Sigmoid colon (tissue), 7 donors: ENCODE measurements at regions of chr1 and their contacts with region 1.

Region 1: DNA sequence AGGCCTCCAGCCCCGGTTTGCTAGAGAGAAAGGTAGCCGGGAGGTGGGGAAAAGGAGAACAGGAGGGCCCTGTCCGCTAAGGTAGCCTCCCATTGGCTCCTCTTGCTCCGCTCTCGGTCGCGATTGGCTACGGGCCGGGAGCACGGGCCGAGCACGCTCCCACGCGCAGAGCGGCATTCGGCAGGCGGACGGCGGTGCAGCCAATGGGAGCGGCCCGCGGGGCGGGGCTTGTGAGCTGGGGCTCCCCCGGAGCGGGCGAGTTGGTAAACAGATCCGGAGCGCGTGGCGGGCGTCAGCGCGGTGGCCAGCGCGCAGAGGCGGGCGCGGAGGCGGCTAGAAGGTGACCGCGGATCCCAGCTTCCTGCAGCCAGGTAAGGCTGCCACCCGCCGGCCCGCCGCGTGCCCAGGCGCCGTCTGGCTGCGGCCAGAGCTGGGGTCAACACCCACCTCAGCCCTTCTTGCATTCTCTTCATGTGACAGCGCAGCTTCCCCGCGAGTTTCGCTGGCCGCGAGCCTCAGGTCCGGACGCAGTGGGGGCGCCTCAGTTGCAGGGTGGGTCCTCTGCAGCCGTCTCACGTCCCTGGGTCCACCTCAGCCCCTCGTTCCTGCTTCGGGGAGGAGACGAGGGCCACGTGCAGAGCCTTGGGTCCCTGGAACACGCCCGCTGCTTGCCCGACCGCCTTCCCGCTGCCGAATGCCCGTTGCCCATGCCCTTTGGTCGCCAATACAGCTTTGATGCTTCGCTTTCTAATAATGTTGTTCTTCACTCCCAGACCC is at the start of gene COQ8A:
- DNase-seq: peak; percentile 100
- H3K4me3 ChIP-seq: peak within 1 kb of the TSS; percentile 62 to 90 (median 72)
- H3K27ac ChIP-seq: peak within 1 kb of the TSS; percentile 96 to 100 (median 100)
- H3K4me1 ChIP-seq: peaks cover 0 to 56% (median 56%) of the 10 kb centered on the region in 4 donors
- H3K27me3 ChIP-seq: no peaks in the 10 kb centered on the region
- CTCF ChIP-seq: no peak
- EP300 ChIP-seq: no peak
- POLR2A ChIP-seq: no peak
- total RNA-seq, gene COQ8A: 57.8 to 129 (median 91.6) TPM

Region 2: DNA sequence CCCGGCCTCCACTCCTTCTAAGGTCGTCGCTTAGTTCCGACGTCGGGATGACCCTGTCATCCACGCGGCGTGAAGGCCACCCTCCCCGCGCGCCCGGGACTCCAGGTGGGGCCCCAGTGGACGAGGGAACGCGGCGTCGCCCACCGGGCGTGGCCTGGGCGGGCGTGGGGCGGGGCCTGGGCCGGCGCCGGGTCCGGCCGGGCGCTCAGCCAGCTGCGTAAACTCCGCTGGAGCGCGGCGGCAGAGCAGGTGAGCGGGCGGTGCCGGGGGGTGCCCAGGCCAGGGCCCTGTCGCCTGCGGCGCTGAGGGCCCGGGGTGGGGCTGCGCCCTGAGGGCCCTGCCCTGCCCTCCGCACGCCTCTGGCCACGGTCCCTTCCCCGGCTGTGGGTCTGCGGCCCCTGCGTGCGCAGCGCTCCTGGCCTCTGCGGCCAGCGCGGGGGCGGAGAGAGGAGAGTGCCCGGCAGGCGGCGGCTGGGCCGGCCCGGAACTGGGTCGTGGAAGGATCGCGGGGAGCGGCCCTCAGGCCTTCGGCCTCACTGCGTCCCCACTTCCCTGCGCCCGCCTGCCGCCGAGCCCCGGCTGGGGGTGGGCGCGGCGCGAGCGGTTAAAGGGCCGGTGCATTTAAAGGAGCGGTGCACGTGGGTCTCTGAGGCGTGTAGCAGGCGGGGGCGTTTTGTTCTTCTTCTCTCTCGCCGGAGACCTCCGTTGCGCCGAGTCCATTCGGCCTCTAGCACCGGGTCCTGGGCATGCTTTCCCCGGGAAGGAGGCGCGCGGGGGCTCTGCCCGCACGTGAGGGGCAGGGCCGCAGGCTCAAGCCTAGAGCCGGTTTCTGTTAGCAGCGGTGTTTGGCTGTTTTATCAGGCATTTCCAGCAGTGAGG is 69.6 kb before region 1 on chr1 and contains the start of gene PSEN2:
- intact Hi-C with region 1: loop called (anchors 5 kb)
- DNase-seq: peak; percentile 86
- H3K4me3 ChIP-seq: peak within 1 kb of the TSS; percentile 65 to 83 (median 75)
- H3K27ac ChIP-seq: peak within 1 kb of the TSS; percentile 82 to 86 (median 84)
- H3K4me1 ChIP-seq: peaks cover 0 to 21% (median 16%) of the 10 kb centered on the region in 4 donors
- H3K27me3 ChIP-seq: no peaks in the 10 kb centered on the region
- CTCF ChIP-seq: peak in 2 of 4 experiments; percentile 23 to 29
- EP300 ChIP-seq: no peak
- POLR2A ChIP-seq: no peak
- total RNA-seq, gene PSEN2: 23.2 to 56.8 (median 32.8) TPM

Region 3: GRCh38 chr1:226973898-226974543 is 33.8 kb after region 1 on chr1:
- intact Hi-C with region 1: loop called (anchors 2 kb)
- DNase-seq: peak; percentile 91
- H3K4me3 ChIP-seq: no peak overlapping the region
- H3K27ac ChIP-seq: peak overlapping the region; percentile 77 to 95 (median 89)
- H3K4me1 ChIP-seq: peaks cover 0 to 39% (median 37%) of the 10 kb centered on the region in 4 donors
- H3K27me3 ChIP-seq: no peaks in the 10 kb centered on the region
- CTCF ChIP-seq: no peak
- EP300 ChIP-seq: peak in 2 of 4 donors; percentile 65 to 78
- POLR2A ChIP-seq: no peak

Region 4: GRCh38 chr1:226990133-226990716 is 50.0 kb after region 1 on chr1:
- intact Hi-C with region 1: loop called (anchors 5 kb)
- DNase-seq: peak; percentile 62
- H3K4me3 ChIP-seq: no peak overlapping the region
- H3K27ac ChIP-seq: peak overlapping the region; percentile 71 to 79 (median 76)
- H3K4me1 ChIP-seq: peaks cover 0 to 50% (median 39%) of the 10 kb centered on the region in 4 donors
- H3K27me3 ChIP-seq: no peaks in the 10 kb centered on the region
- CTCF ChIP-seq: no peak
- EP300 ChIP-seq: no peak
- POLR2A ChIP-seq: no peak

Region 5: GRCh38 chr1:227185291-227185690 is 245.1 kb after region 1 on chr1:
- intact Hi-C with region 1: no loop called
- DNase-seq: no peak
- H3K4me3 ChIP-seq: no peak overlapping the region
- H3K27ac ChIP-seq: no peak overlapping the region
- H3K4me1 ChIP-seq: no peaks in the 10 kb centered on the region
- H3K27me3 ChIP-seq: no peaks in the 10 kb centered on the region
- CTCF ChIP-seq: no peak
- EP300 ChIP-seq: no peak
- POLR2A ChIP-seq: no peak

Region 6: GRCh38 chr1:227318003-227318852 is 378.0 kb after region 1 on chr1 and contains the start of gene CDC42BPA:
- intact Hi-C with region 1: loop called (anchors 2 kb)
- DNase-seq: peak; percentile 94
- H3K4me3 ChIP-seq: peak within 1 kb of the TSS; percentile 65 to 96 (median 85)
- H3K27ac ChIP-seq: peak within 1 kb of the TSS; percentile 86 to 97 (median 96)
- H3K4me1 ChIP-seq: peaks cover 0 to 23% (median 11%) of the 10 kb centered on the region in 4 donors
- H3K27me3 ChIP-seq: no peaks in the 10 kb centered on the region
- CTCF ChIP-seq: no peak
- EP300 ChIP-seq: no peak
- POLR2A ChIP-seq: peak; percentile 38 to 55
- total RNA-seq, gene CDC42BPA: 60.8 to 93.6 (median 66.3) TPM